Left lung (tissue), 14 donors: ENCODE measurements at regions of chr7 and their contacts with region 1.

Region 1: DNA sequence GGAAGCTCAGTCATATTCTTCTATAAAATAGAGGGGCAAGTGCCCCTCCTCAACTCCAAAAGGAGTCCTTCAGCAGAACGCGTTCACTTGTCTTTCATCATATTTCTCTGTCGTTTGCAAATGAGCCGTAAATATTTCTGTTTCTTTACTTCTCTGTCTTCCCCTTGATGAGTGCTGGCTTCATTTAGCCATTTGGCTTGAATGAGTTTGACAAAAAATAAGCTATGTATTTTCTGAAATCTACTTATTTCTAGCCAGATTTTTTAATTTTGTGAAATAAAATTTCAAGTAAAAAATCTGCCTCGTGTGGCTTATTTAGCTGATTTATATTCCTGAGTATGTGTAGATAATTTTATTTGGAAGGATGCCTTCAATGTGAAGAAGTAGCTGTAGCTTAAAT is 170.8 kb upstream of the DGKB start:
- DNase-seq: no peak
- ATAC-seq: no peak
- H3K4me3 ChIP-seq: no peak overlapping the region
- H3K27ac ChIP-seq: no peak overlapping the region
- H3K4me1 ChIP-seq: no peaks in the 10 kb centered on the region
- H3K27me3 ChIP-seq: no peaks in the 10 kb centered on the region
- CTCF ChIP-seq: no peak

Region 2: DNA sequence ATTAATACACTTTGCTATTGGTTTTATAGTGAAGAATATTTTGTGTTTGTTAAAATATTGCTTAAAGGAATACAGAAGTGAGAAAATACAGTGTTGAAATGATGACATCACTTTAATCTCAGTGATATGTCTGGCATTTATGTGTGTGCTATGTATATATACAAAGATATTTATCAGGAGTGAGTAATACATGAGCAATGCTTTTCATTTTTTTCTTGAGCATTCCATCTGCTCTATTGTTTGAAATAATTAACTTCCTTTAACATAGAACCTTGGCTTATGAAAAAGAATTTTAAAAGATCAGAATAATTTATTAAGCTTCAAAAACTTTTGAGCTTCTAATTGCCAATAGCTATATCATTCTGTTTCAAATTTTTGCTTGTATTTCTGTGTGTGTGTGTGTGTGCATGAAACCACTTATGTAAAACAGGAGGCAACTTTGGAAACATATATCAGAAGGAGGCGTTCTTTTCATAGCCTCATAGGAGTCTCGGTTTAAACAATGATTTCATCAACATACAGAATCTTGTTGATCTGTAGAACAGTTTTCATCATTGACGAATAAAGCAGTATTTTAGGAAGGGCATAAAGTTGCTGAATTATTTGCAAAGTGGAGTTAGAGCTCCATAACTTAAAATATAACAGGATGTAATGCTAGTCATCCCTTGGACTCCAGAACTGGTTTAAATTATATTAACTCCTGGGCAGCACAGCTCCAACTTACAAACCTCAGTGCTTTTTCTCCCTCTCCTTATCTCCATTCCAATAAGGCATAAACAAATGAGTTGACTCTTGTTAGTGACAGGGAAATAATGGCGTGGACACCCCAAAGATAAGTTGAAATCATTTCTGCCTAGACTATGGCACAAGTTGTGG is 57.6 kb after region 1 on chr7:
- intact Hi-C with region 1: loop called in 1 of 2 experiments (anchors 10 kb)
- DNase-seq: no peak
- ATAC-seq: no peak
- H3K4me3 ChIP-seq: no peak overlapping the region
- H3K27ac ChIP-seq: no peak overlapping the region
- H3K4me1 ChIP-seq: no peaks in the 10 kb centered on the region
- H3K27me3 ChIP-seq: no peaks in the 10 kb centered on the region
- CTCF ChIP-seq: no peak

Region 3: GRCh38 chr7:15158141-15158810 is 85.0 kb after region 1 on chr7:
- intact Hi-C with region 1: no loop called
- DNase-seq: no peak
- ATAC-seq: no peak
- H3K4me3 ChIP-seq: no peak overlapping the region
- H3K27ac ChIP-seq: no peak overlapping the region
- H3K4me1 ChIP-seq: no peaks in the 10 kb centered on the region
- H3K27me3 ChIP-seq: no peaks in the 10 kb centered on the region
- CTCF ChIP-seq: no peak

Region 4: DNA sequence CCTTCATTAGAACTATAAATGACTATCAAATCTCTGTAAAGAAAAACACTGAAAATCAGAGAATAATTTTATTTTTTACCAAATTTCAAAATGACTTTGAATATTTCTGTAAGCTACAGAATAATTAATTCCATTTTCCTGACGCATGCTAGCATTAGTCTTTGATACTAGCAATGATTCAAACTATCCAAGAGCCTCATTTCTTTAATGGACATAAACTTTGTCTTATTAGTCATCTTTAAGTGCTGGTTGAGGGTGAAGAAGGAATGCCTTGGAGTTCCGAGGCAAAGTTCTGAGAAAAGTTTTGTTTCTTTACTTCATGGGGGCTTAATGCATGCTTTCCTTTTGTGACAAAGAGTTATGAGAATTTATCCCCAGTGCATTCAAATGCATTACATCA is 351.2 kb after region 1 on chr7:
- intact Hi-C with region 1: no loop called
- DNase-seq: no peak
- ATAC-seq: no peak
- H3K4me3 ChIP-seq: no peak overlapping the region
- H3K27ac ChIP-seq: no peak overlapping the region
- H3K4me1 ChIP-seq: no peaks in the 10 kb centered on the region
- H3K27me3 ChIP-seq: no peaks in the 10 kb centered on the region
- CTCF ChIP-seq: no peak